ENCODE measurements at regions of chr3 and their contacts with region 1.

Region 1: DNA sequence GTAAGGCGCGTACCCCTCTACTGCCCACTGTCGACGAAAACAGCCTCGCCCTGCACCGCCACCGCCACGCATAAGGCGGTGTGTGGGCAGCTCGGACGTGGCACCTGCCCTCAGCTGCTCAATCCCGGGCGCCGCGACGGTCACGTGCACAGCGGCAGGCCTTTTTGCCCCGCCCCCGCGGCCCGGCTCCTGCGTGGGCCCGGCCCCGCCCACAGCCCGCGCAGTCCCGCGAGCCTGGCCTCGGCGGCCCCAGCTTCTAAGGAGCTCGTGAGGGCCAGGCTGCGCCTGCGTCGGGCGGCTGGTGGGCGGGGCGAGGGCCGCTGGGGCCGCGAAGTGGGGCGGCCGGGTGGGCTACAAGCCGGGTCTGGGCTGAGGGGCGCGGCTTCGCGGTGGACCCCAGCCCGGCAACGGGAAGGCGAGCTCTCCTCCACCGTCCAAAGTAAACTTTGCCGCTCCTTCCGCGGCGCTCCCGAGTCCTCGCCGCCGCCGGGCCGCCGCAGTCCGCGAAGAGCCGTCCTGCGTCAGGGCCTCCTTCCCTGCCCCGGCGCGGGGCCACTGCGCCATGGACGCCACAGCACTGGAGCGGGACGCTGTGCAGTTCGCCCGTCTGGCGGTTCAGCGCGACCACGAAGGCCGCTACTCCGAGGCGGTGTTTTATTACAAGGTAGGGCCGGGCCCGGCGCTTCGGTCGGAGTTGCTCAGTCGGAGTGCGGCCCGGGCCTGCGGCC is at the start of gene CAPN7:
- DNase-seq: peak; percentile 84 to 97
- H3K4me3 ChIP-seq: peak within 1 kb of the TSS; percentile 89 to 99
- H3K27ac ChIP-seq: peak within 1 kb of the TSS; percentile 91 to 97
- H3K4me1 ChIP-seq: peaks cover 0 to 25% of the 10 kb centered on the region in 2 donors
- H3K27me3 ChIP-seq: no peaks in the 10 kb centered on the region
- CTCF ChIP-seq: peak; percentile 46 to 60 (median 47)
- total RNA-seq, gene CAPN7: 38.6 TPM

Region 2: GRCh38 chr3:14125191-14126016 is 1080.7 kb before region 1 on chr3:
- intact Hi-C with region 1: no loop called
- DNase-seq: peak; percentile 60 to 92
- H3K4me3 ChIP-seq: peak overlapping the region; percentile 84 to 100
- H3K27ac ChIP-seq: peak overlapping the region; percentile 96 to 98
- H3K4me1 ChIP-seq: peaks cover 19 to 26% of the 10 kb centered on the region in 2 donors
- H3K27me3 ChIP-seq: no peaks in the 10 kb centered on the region
- CTCF ChIP-seq: peak in 1 of 3 experiments; percentile 9

Region 3: DNA sequence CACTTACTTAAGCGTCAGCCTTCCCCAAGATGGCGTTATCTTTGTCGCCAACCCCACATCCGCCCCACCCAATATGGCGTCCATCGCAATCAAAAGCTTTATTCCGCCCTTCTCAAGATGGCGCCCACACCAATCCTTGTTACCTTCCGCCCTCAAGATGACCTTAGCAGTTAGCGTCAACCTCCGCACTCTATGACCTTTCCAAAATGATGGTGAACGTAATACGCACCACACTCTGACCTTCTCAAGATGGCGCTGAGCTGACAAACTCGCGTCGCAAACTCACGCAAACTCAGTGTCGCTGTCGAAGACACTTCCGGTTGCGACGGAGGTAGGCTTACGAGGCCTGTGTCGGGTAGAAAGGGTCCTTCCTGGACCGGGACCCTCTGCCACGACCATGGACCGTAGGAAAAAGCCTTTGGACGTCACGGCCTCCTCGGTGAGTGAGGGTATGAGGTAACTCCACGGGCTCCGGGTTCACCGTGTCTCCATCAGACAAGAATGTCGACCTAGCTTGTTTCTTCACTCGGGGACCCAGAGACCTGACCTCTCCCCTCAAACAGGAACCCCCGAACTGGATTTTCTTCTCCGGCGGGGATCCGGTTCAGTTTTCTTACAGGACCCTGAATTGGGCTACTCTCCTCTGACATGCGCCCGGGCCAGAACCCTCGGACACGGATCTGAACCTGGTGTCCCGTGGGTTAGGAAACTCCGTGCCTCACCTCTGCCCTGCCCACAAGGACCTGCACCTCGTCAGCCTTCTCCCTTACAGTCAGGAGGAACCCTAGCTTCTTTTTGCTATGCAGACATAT is 554.5 kb before region 1 on chr3 and contains the start of gene CCDC174:
- intact Hi-C with region 1: loop called (anchors 2 kb)
- DNase-seq: peak; percentile 89 to 98
- H3K4me3 ChIP-seq: peak within 1 kb of the TSS; percentile 64 to 80
- H3K27ac ChIP-seq: peak within 1 kb of the TSS; percentile 77 to 91
- H3K4me1 ChIP-seq: peaks cover 7 to 16% of the 10 kb centered on the region in 2 donors
- H3K27me3 ChIP-seq: no peaks in the 10 kb centered on the region
- CTCF ChIP-seq: no peak
- total RNA-seq, gene CCDC174: 5.5 TPM

Region 4: DNA sequence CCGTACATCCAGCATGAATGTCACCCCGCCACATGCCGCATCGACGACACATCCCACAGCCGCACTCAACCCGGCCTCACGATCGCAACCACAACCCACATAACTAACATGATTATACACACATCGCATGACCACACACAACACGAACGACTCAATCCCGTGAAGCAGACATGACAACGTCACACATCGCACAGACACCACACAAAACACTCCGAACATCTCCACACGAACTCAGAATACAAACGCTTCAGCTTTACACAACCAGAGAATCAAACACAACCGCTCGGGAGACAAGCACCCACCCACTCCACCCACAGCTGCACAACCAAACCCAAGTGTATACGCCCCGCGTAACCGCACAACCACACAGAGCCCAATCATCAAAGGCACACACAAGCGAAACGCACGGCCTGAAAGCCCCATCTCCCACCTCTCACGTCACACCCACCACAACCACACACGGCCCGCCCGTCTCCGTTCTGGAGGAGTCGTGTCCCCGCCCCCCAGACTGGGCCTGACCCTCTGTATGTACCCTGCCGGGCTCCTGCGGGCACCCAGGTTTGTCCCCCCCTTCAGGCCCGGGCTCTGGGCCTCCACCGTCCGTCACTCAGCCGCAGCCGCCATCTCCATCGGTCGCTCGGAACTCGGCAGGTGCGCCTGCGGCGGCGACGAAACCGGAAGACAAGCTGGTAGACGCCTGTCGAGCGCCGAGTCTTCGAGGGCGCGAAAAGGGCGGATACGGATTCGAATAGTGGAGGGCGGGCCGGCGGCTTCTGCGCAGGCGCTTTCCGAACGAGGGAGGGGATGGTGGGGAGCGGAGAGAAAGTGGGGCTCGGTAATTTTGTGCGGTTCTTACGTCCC is 107.4 kb before region 1 on chr3 and contains the start of gene RBSN:
- intact Hi-C with region 1: loop called (anchors 2 kb)
- DNase-seq: peak; percentile 85 to 96
- H3K4me3 ChIP-seq: peak within 1 kb of the TSS; percentile 88 to 93
- H3K27ac ChIP-seq: peak within 1 kb of the TSS; percentile 91
- H3K4me1 ChIP-seq: peaks cover 0 to 47% of the 10 kb centered on the region in 2 donors
- H3K27me3 ChIP-seq: no peaks in the 10 kb centered on the region
- CTCF ChIP-seq: no peak
- total RNA-seq, gene RBSN: 17.2 TPM

Region 5: DNA sequence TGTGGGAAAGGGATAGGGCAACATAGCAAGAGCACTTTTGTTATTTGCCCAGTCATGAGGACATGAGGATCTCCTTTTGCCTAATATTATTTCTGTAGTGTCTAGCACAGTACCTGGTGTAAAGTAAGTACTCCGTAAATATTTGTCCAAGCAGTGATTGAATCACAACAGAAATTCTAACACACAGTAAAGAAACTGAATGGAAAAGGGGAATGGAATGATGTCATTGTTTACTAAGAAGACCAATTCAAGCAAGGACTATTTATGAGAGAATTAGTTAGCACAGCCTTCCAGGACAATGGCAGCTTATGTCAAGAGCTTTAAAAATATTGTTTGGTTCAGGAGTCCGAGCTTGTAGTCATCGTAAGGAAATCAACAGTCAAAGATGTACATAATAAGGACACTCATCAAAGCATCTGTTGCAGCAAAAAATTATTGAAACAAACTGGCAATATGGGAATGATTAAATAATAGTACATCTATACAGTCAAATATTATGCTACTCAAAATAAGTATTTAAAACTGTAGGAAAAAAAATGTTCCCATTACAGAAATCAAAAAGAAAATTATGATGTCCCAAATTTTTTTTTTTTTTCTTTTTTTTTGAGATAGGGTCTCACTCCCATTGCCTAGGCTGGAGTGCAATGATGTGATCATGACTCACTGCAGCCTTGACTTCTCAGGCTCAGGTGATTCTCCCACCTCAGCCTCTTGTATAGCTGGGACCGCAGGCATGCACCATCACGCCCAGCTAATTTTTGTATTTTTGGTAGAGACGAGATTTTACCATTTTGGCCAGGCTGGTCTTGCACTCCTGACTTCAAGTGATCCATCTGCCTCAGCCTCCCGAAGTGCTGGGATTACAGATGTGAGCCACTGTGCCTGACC is 17.8 kb after region 1 on chr3:
- intact Hi-C with region 1: no loop called
- DNase-seq: no peak
- H3K4me3 ChIP-seq: no peak overlapping the region
- H3K27ac ChIP-seq: no peak overlapping the region
- H3K4me1 ChIP-seq: no peaks in the 10 kb centered on the region
- H3K27me3 ChIP-seq: no peaks in the 10 kb centered on the region
- CTCF ChIP-seq: no peak

Region 6: GRCh38 chr3:15332405-15333098 is 126.5 kb after region 1 on chr3 and contains the start of gene SH3BP5:
- intact Hi-C with region 1: loop called (anchors 2 kb)
- DNase-seq: peak in 1 of 2 donors; percentile 84
- H3K4me3 ChIP-seq: peak within 1 kb of the TSS; percentile 95 to 99
- H3K27ac ChIP-seq: peak within 1 kb of the TSS; percentile 92 to 94
- H3K4me1 ChIP-seq: peaks cover 0 to 16% of the 10 kb centered on the region in 2 donors
- H3K27me3 ChIP-seq: no peaks in the 10 kb centered on the region
- CTCF ChIP-seq: peak; percentile 62 to 92 (median 83)
- total RNA-seq, gene SH3BP5: 65.9 TPM

Region 7: DNA sequence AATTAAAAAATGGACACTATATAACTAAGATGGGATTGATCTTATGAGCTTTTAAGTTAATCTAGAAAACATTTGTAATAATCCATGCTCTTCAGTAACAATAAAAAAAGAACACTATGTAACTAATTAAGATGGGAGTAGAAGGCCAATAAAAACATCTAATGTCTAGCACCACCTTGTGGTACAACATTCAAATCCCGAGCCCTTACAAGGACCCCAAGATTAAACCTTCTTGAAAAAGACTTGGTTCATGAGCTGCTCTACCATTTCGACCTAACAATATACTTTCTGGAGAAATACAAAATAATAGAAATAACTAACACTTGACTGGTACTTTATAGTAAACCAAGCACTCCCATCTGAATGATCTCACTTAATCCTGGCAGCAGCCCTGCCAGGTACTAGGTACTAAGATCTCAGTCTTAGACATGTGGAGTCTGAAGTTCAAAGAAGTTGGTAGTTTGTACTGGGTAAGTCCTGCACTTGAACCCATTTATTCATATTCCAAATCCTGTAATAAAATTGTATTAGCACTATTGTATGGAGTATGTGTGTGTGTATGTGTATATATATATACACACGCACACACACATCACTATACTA is 199.5 kb after region 1 on chr3:
- intact Hi-C with region 1: loop called (anchors 1 kb)
- DNase-seq: no peak
- H3K4me3 ChIP-seq: no peak overlapping the region
- H3K27ac ChIP-seq: no peak overlapping the region
- H3K4me1 ChIP-seq: no peaks in the 10 kb centered on the region
- H3K27me3 ChIP-seq: no peaks in the 10 kb centered on the region
- CTCF ChIP-seq: peak; percentile 28 to 55 (median 30)

Region 8: DNA sequence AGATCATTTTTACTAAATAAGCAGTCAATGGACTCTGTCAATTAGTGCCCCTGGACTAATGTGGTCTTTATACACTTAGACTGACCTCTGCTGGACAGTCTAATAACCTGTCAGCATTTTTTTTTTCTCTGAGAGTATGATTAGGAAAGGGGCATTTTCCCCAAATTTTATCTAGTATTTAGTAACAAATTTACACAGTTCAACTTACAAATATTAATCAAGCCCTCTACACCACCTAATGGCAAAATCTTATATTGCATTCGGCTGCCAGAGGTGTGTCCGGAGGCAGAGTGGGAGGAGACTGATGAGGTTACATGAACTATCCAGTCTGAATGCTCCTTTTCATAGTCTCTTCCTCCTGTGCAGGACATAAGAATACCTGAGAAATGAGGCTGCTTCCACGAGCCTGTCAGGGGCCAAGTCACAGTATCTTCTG is 351.4 kb after region 1 on chr3:
- intact Hi-C with region 1: loop called (anchors 1 kb)
- DNase-seq: peak in 1 of 2 donors; percentile 77
- H3K4me3 ChIP-seq: no peak overlapping the region
- H3K27ac ChIP-seq: peak overlapping the region in 1 of 2 donors; percentile 43
- H3K4me1 ChIP-seq: no peaks in the 10 kb centered on the region
- H3K27me3 ChIP-seq: no peaks in the 10 kb centered on the region
- CTCF ChIP-seq: peak; percentile 41 to 70 (median 48)